B cell (primary cell): ENCODE measurements at regions of chr17 and their contacts with region 1.

Region 1: DNA sequence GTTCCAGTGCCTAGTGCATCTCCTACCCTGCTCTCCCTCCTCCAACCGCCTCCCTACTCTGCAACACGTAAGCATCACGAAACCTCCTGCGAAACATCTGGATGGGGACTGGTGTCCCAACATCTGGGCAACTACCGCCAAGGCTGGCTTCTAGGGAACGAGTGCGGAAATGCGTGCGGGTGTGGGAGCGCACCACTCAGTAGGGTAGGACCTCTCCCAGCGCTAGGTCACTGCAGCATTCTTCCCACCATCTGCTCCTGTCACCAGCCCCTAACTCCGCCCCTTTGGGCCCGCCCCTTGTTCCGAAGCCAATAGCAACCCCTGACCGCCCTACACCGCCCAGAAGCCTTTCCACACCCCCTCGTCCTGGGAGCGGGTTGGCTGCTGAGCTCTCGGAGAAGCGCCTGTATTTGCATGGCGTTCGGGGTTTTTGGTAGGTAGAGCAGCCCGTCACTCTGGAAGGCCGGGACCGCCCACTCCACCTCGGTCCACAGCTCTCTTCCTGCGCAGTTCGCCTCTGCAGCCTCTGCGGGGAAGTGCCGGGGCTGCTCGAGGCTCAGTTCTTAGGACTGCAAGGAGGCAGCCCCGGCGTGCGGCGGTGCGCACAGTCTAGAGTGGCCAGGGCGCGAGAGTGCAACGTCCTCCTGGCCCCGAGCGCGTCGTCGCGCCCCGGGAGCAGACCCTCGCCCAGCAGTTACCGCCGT is at the start of gene HS3ST3B1:
- DNase-seq: peak; percentile 95
- ATAC-seq: peak; percentile 80
- H3K4me3 ChIP-seq: peak within 1 kb of the TSS; percentile 59 to 76 (median 60)
- H3K4me3 Mint-ChIP-seq: peak within 1 kb of the TSS; percentile 96
- H3K27ac ChIP-seq: peak within 1 kb of the TSS; percentile 39 to 64
- H3K27ac Mint-ChIP-seq: peak within 1 kb of the TSS; percentile 94
- H3K4me1 ChIP-seq: peaks cover 57 to 59% of the 10 kb centered on the region in 2 donors
- H3K4me1 Mint-ChIP-seq: peaks cover 59% of the 10 kb centered on the region
- H3K27me3 ChIP-seq: peaks cover 0 to 79% (median 46%) of the 10 kb centered on the region in 4 experiments
- H3K27me3 Mint-ChIP-seq: peaks cover 61% of the 10 kb centered on the region
- CTCF ChIP-seq: no peak
- total RNA-seq, gene HS3ST3B1: 8.4 and 9.0 TPM in 2 replicates

Region 2: GRCh38 chr17:13031718-13032350 is 1268.9 kb before region 1 on chr17:
- CTCF ChIA-PET with region 1: no interaction called
- POLR2A ChIA-PET with region 1: no interaction called
- intact Hi-C with region 1: loop called (anchors 5 kb)
- DNase-seq: peak; percentile 68
- ATAC-seq: peak; percentile 73
- H3K4me3 ChIP-seq: peak overlapping the region in 2 of 5 experiments; percentile 27 to 36
- H3K4me3 Mint-ChIP-seq: peak overlapping the region; percentile 66
- H3K27ac ChIP-seq: no peak overlapping the region
- H3K27ac Mint-ChIP-seq: no peak overlapping the region
- H3K4me1 ChIP-seq: peaks cover 0 to 5% of the 10 kb centered on the region in 2 donors
- H3K4me1 Mint-ChIP-seq: peaks cover 6% of the 10 kb centered on the region
- H3K27me3 ChIP-seq: peaks cover 0 to 3% (median 0%) of the 10 kb centered on the region in 4 experiments
- H3K27me3 Mint-ChIP-seq: peaks cover 19% of the 10 kb centered on the region
- CTCF ChIP-seq: peak; percentile 86

Region 3: DNA sequence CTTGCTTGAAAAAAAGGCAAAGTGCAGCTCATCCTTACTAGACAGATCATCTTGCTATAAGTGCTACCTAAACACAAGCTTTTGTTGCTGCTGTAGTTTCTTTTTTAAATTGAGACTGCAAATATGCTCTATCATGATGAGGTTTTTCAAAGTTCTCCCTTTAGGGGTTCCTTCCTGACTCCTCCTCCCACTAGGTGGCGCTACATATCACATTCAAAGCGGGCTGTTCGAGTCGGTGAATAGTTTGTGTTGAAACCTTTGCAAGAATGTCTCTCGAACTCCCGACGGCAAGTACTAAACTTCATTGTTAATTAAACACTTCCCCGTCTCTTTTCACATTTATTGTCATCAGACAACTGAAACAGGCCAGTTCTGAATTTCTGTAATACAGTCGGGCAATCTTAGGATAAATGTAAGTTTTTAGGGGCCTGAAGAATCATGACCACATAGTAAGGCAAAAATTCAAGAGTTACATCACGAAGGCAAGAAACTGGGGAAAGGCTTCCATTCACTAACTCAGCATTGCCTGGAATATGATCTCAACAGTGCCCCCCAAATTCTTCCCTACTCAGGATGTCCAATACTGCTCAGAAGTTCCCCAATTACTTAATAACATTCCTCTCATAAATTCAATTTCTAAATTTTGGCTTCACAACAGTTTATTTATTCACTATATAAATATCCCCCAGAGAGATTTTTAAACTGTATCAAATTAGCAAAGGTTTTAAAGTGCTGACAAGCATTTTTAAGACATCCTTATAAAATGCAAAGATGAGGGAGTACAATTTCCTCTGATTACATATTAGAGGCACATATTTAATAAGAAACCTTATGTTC is 705.7 kb before region 1 on chr17:
- CTCF ChIA-PET with region 1: interaction called, 53 read pairs
- POLR2A ChIA-PET with region 1: no interaction called
- intact Hi-C with region 1: loop called (anchors 1 kb)
- DNase-seq: peak; percentile 79
- ATAC-seq: peak; percentile 45
- H3K4me3 ChIP-seq: no peak overlapping the region
- H3K4me3 Mint-ChIP-seq: no peak overlapping the region
- H3K27ac ChIP-seq: no peak overlapping the region
- H3K27ac Mint-ChIP-seq: no peak overlapping the region
- H3K4me1 ChIP-seq: no peaks in the 10 kb centered on the region
- H3K4me1 Mint-ChIP-seq: peaks cover 3% of the 10 kb centered on the region
- H3K27me3 ChIP-seq: peaks cover 2 to 18% (median 9%) of the 10 kb centered on the region in 4 experiments
- H3K27me3 Mint-ChIP-seq: peaks cover 37% of the 10 kb centered on the region
- CTCF ChIP-seq: peak; percentile 91

Region 4: GRCh38 chr17:14351493-14351892 is 50.8 kb after region 1 on chr17:
- CTCF ChIA-PET with region 1: interaction called, 24 read pairs
- POLR2A ChIA-PET with region 1: interaction called, 21 read pairs
- intact Hi-C with region 1: loop called (anchors 1 kb)
- DNase-seq: peak; percentile 79
- ATAC-seq: peak; percentile 93
- H3K4me3 ChIP-seq: no peak overlapping the region
- H3K4me3 Mint-ChIP-seq: peak overlapping the region; percentile 60
- H3K27ac ChIP-seq: no peak overlapping the region
- H3K27ac Mint-ChIP-seq: peak overlapping the region; percentile 64
- H3K4me1 ChIP-seq: peaks cover 15 to 20% of the 10 kb centered on the region in 2 donors
- H3K4me1 Mint-ChIP-seq: peaks cover 27% of the 10 kb centered on the region
- H3K27me3 ChIP-seq: peaks cover 0 to 53% (median 41%) of the 10 kb centered on the region in 4 experiments
- H3K27me3 Mint-ChIP-seq: peaks cover 33% of the 10 kb centered on the region
- CTCF ChIP-seq: no peak

Region 5: GRCh38 chr17:14427900-14428647 is 127.3 kb after region 1 on chr17:
- CTCF ChIA-PET with region 1: interaction called, 32 read pairs
- POLR2A ChIA-PET with region 1: interaction called, 6 read pairs
- intact Hi-C with region 1: loop called (anchors 1 kb)
- DNase-seq: peak; percentile 77
- ATAC-seq: peak; percentile 87
- H3K4me3 ChIP-seq: peak overlapping the region; percentile 13 to 71 (median 38)
- H3K4me3 Mint-ChIP-seq: peak overlapping the region; percentile 83
- H3K27ac ChIP-seq: peak overlapping the region; percentile 58 to 79
- H3K27ac Mint-ChIP-seq: peak overlapping the region; percentile 93
- H3K4me1 ChIP-seq: peaks cover 44 to 45% of the 10 kb centered on the region in 2 donors
- H3K4me1 Mint-ChIP-seq: peaks cover 45% of the 10 kb centered on the region
- H3K27me3 ChIP-seq: no peaks in the 10 kb centered on the region
- H3K27me3 Mint-ChIP-seq: peaks cover 5% of the 10 kb centered on the region
- CTCF ChIP-seq: no peak